B cell (primary cell): ENCODE measurements at regions of chr3 and their contacts with region 1.

Region 1: GRCh38 chr3:186915806-186916796 is 14.2 kb upstream of the ST6GAL1 start:
- DNase-seq: peak; percentile 36
- ATAC-seq: peak; percentile 79
- H3K4me3 ChIP-seq: peak overlapping the region in 1 of 5 experiments; percentile 18
- H3K4me3 Mint-ChIP-seq: peak overlapping the region; percentile 64
- H3K27ac ChIP-seq: no peak overlapping the region
- H3K27ac Mint-ChIP-seq: peak overlapping the region; percentile 77
- H3K4me1 ChIP-seq: peaks cover 11 to 14% of the 10 kb centered on the region in 2 donors
- H3K4me1 Mint-ChIP-seq: peaks cover 33% of the 10 kb centered on the region
- H3K27me3 ChIP-seq: no peaks in the 10 kb centered on the region
- H3K27me3 Mint-ChIP-seq: no peaks in the 10 kb centered on the region
- CTCF ChIP-seq: no peak

Region 2: GRCh38 chr3:186857743-186858142 is 58.4 kb before region 1 on chr3:
- CTCF ChIA-PET with region 1: no interaction called
- POLR2A ChIA-PET with region 1: no interaction called
- intact Hi-C with region 1: no loop called
- DNase-seq: no peak
- ATAC-seq: no peak
- H3K4me3 ChIP-seq: no peak overlapping the region
- H3K4me3 Mint-ChIP-seq: no peak overlapping the region
- H3K27ac ChIP-seq: no peak overlapping the region
- H3K27ac Mint-ChIP-seq: no peak overlapping the region
- H3K4me1 ChIP-seq: no peaks in the 10 kb centered on the region
- H3K4me1 Mint-ChIP-seq: peaks cover 5% of the 10 kb centered on the region
- H3K27me3 ChIP-seq: no peaks in the 10 kb centered on the region
- H3K27me3 Mint-ChIP-seq: no peaks in the 10 kb centered on the region
- CTCF ChIP-seq: no peak

Region 3: DNA sequence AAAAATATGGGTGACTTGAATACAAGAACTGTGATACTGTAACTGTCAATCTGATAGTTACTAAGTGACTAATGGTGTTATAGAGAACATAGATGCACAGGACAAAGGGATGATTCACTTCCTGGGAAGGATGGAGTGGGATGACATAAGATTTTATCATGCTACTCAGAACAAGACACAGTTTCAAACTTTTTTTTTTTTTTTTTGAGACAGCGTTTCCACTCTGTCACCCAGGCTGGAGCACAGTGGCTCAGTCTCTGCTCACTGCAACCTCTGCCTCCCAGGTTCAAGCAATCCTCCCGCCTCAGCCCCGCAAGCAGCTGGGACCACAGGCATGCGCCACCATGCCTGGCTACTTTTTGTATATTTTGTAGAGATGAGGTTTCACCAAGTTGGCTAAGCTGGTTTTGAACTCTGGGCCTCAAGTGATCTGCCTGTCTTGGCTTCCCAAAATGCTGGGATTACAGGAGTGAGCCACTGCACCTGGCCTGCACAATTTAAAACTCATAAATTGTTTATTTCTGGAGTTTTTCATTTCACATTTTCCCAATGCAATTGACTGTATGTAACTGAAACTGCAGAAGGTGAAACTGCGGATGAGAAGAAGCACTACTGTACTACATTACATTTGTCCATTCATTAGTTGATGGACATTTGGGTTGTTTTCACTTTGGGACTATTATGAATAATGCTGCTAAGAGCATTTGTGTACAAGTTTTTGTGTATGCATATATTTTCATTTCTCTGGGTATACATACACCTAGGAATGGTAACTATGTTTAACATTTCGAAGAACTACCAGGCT is 33.0 kb before region 1 on chr3:
- CTCF ChIA-PET with region 1: no interaction called
- POLR2A ChIA-PET with region 1: no interaction called
- intact Hi-C with region 1: loop called (anchors 5 kb)
- DNase-seq: no peak
- ATAC-seq: no peak
- H3K4me3 ChIP-seq: no peak overlapping the region
- H3K4me3 Mint-ChIP-seq: no peak overlapping the region
- H3K27ac ChIP-seq: no peak overlapping the region
- H3K27ac Mint-ChIP-seq: no peak overlapping the region
- H3K4me1 ChIP-seq: no peaks in the 10 kb centered on the region
- H3K4me1 Mint-ChIP-seq: peaks cover 9% of the 10 kb centered on the region
- H3K27me3 ChIP-seq: peaks cover 0 to 5% (median 0%) of the 10 kb centered on the region in 4 experiments
- H3K27me3 Mint-ChIP-seq: peaks cover 23% of the 10 kb centered on the region
- CTCF ChIP-seq: no peak